Heart left ventricle (tissue), 16 donors: ENCODE measurements at regions of chr22 and their contacts with region 1.

Region 1: DNA sequence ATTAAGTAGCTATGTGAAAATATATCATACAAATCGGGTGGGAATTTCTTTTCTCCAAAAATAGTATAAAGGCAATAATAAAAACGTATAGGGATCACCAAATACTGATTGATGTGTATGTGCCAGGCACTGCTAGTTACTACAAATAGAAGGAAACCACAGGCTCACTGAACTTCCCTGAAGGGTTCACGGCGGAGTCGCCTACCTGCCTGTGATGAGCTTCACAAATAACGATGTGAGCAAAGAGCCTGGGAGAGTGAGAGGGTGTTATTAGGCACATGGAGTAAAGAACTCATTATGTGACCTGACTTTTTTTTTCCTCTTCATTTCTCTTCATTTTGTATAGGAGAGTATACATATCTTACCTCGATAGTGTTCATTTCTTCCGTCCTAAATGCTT is 36.0 kb upstream of the L3MBTL2 start:
- DNase-seq: no peak
- ATAC-seq: no peak
- H3K4me3 ChIP-seq: no peak overlapping the region
- H3K27ac ChIP-seq: no peak overlapping the region
- H3K4me1 ChIP-seq: peaks cover 0 to 6% (median 0%) of the 10 kb centered on the region in 12 donors
- H3K27me3 ChIP-seq: no peaks in the 10 kb centered on the region
- CTCF ChIP-seq: no peak
- POLR2A ChIP-seq: no peak

Region 2: GRCh38 chr22:40838486-40838885 is 330.7 kb before region 1 on chr22:
- intact Hi-C with region 1: loop called in 1 of 10 experiments (anchors 10 kb)
- DNase-seq: no peak
- ATAC-seq: no peak
- H3K4me3 ChIP-seq: no peak overlapping the region
- H3K27ac ChIP-seq: no peak overlapping the region
- H3K4me1 ChIP-seq: no peaks in the 10 kb centered on the region
- H3K27me3 ChIP-seq: no peaks in the 10 kb centered on the region
- CTCF ChIP-seq: no peak
- POLR2A ChIP-seq: no peak

Region 3: DNA sequence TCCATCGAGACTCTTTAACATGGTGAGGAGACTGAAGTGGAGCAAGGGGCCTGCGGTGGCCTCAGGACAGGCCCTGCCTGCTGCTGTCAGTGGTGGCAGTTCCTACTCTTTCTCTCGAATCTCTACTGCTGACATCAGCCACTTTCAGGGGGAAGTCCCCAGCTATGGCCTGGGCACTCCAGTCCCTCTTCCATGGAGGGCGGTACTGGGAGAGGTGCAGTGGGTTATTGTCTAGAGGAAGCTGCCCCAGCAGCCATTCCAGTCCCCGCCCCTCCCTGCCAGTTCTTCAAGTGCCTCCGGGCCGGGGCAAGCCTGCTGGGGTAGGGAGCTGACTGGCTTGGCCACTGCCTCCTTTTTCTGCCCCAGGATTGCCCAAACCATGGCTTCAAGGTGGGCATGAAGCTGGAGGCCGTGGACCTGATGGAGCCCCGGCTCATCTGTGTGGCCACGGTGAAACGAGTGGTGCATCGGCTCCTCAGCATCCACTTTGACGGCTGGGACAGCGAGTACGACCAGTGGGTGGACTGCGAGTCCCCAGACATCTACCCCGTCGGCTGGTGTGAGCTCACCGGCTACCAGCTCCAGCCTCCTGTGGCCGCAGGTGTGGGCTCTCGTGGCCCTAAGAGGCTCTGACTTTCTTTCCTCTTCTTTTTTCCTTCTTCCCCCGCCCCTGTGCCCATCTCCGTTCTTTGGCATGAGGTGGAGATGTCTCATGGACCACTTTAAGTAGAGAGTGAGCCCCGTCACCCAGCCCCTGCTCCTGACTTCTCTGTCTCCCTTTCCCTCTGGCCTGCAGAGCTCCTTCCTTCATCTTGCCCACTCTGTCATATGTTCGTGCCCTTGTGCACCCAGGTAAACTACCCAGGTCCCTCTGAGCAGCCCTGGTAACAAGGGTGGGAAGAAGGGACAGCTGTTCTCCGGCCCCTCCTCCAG is 57.8 kb after region 1 on chr22:
- intact Hi-C with region 1: no loop called
- DNase-seq: peak in 3 of 5 donors; percentile 39 to 70 (median 57)
- ATAC-seq: peak in 3 of 4 donors; percentile 14 to 44 (median 34)
- H3K4me3 ChIP-seq: no peak overlapping the region
- H3K27ac ChIP-seq: peak overlapping the region in 1 of 12 donors; percentile 66
- H3K4me1 ChIP-seq: peaks cover 0 to 31% (median 24%) of the 10 kb centered on the region in 12 donors
- H3K27me3 ChIP-seq: no peaks in the 10 kb centered on the region
- CTCF ChIP-seq: no peak
- POLR2A ChIP-seq: no peak

Region 4: GRCh38 chr22:41411021-41411851 is 242.1 kb after region 1 on chr22:
- intact Hi-C with region 1: no loop called
- DNase-seq: peak in 2 of 5 donors; percentile 45 to 72
- ATAC-seq: peak; percentile 8 to 34 (median 26)
- H3K4me3 ChIP-seq: no peak overlapping the region
- H3K27ac ChIP-seq: peak overlapping the region; percentile 92 to 100 (median 98)
- H3K4me1 ChIP-seq: peaks cover 0 to 57% (median 42%) of the 10 kb centered on the region in 12 donors
- H3K27me3 ChIP-seq: no peaks in the 10 kb centered on the region
- CTCF ChIP-seq: no peak
- POLR2A ChIP-seq: peak in 1 of 2 donors; percentile 66